IMR-90 (cell line): ENCODE measurements at regions of chr1 and their contacts with region 1.

Region 1: GRCh38 chr1:217153361-217153760 is 430.1 kb upstream of the ESRRG start:
- DNase-seq: no peak
- ATAC-seq: no peak
- H3K4me3 ChIP-seq: no peak overlapping the region
- H3K27ac ChIP-seq: no peak overlapping the region
- H3K4me1 ChIP-seq: no peaks in the 10 kb centered on the region
- H3K27me3 ChIP-seq: no peaks in the 10 kb centered on the region
- CTCF ChIP-seq: no peak
- POLR2A ChIP-seq: no peak
- RAD21 ChIP-seq: no peak

Region 2: GRCh38 chr1:216690603-216691002 is 462.8 kb before region 1 on chr1:
- CTCF ChIA-PET with region 1: no interaction called
- POLR2A ChIA-PET with region 1: no interaction called
- dilution Hi-C with region 1: no loop called
- in situ Hi-C with region 1: no loop called
- intact Hi-C with region 1: no loop called
- DNase-seq: no peak
- ATAC-seq: no peak
- H3K4me3 ChIP-seq: no peak overlapping the region
- H3K27ac ChIP-seq: no peak overlapping the region
- H3K4me1 ChIP-seq: no peaks in the 10 kb centered on the region; the same call in 1 of the 2 replicates
- H3K27me3 ChIP-seq: no peaks in the 10 kb centered on the region
- CTCF ChIP-seq: no peak
- POLR2A ChIP-seq: no peak
- RAD21 ChIP-seq: no peak

Region 3: GRCh38 chr1:216771922-216772321 is 381.4 kb before region 1 on chr1:
- CTCF ChIA-PET with region 1: no interaction called
- POLR2A ChIA-PET with region 1: no interaction called
- dilution Hi-C with region 1: no loop called
- in situ Hi-C with region 1: no loop called
- intact Hi-C with region 1: loop called (anchors 5 kb)
- DNase-seq: no peak
- ATAC-seq: no peak
- H3K4me3 ChIP-seq: no peak overlapping the region
- H3K27ac ChIP-seq: no peak overlapping the region
- H3K4me1 ChIP-seq: no peaks in the 10 kb centered on the region
- H3K27me3 ChIP-seq: no peaks in the 10 kb centered on the region
- CTCF ChIP-seq: no peak
- POLR2A ChIP-seq: no peak
- RAD21 ChIP-seq: no peak

Region 4: DNA sequence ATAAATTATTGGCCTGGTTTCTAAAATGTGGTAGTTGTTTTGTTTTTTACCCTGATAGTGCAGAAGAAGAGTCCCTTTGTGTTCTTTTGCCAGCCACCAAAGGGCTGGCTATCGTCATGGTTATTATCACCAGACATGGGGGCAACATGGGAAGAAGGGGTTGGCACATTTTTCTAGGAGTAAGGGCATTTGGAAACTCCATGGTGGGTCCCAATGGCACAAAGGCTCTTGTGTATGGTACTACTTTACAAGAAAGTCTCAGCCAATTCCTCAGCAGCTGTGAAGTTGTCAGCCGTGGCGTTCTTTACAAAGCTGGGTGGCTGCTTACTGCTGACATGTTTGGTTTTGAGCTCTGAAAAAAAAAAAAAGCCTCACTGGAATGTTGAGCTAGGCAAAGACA is 99.7 kb before region 1 on chr1:
- CTCF ChIA-PET with region 1: no interaction called
- POLR2A ChIA-PET with region 1: no interaction called
- dilution Hi-C with region 1: no loop called
- in situ Hi-C with region 1: no loop called
- intact Hi-C with region 1: no loop called
- DNase-seq: no peak
- ATAC-seq: no peak
- H3K4me3 ChIP-seq: no peak overlapping the region
- H3K27ac ChIP-seq: no peak overlapping the region
- H3K4me1 ChIP-seq: no peaks in the 10 kb centered on the region
- H3K27me3 ChIP-seq: no peaks in the 10 kb centered on the region
- CTCF ChIP-seq: no peak
- POLR2A ChIP-seq: no peak
- RAD21 ChIP-seq: no peak